Heart left ventricle (tissue), 16 donors: ENCODE measurements at regions of chr15 and their contacts with region 1.

Region 1: GRCh38 chr15:63891079-63891767 is 57.5 kb upstream of the HERC1 start:
- DNase-seq: peak; percentile 73 to 88 (median 80)
- ATAC-seq: peak; percentile 24 to 86 (median 80)
- H3K4me3 ChIP-seq: no peak overlapping the region
- H3K27ac ChIP-seq: peak overlapping the region in 1 of 12 donors; percentile 63
- H3K4me1 ChIP-seq: peaks cover 0 to 72% (median 5%) of the 10 kb centered on the region in 12 donors
- H3K27me3 ChIP-seq: no peaks in the 10 kb centered on the region
- CTCF ChIP-seq: peak; percentile 80 to 94 (median 87)
- POLR2A ChIP-seq: no peak

Region 2: DNA sequence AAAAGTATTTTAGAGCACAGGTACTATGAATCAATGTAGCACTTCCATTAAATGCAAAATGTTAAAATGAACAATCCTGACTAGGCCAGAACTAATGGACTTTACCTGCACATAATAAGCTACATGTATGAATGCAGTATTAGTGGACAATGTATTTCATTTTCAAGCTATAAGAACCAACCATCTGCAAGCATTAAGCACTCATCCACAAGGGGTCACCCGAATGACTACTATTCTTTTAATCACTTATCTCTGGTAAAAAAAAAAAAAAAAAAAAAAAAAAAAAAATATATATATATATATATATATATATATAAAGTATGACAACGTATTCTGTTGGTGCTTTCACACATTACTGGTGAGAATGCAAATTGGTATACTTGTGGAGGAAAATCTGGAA is 64.7 kb before region 1 on chr15:
- intact Hi-C with region 1: loop called in 3 of 10 experiments (anchors 2 to 5 kb)
- DNase-seq: no peak
- ATAC-seq: no peak
- H3K4me3 ChIP-seq: no peak overlapping the region
- H3K27ac ChIP-seq: no peak overlapping the region
- H3K4me1 ChIP-seq: peaks cover 0 to 55% (median 35%) of the 10 kb centered on the region in 12 donors
- H3K27me3 ChIP-seq: no peaks in the 10 kb centered on the region
- CTCF ChIP-seq: peak in 5 of 12 donors; percentile 15 to 31 (median 19)
- POLR2A ChIP-seq: no peak

Region 3: DNA sequence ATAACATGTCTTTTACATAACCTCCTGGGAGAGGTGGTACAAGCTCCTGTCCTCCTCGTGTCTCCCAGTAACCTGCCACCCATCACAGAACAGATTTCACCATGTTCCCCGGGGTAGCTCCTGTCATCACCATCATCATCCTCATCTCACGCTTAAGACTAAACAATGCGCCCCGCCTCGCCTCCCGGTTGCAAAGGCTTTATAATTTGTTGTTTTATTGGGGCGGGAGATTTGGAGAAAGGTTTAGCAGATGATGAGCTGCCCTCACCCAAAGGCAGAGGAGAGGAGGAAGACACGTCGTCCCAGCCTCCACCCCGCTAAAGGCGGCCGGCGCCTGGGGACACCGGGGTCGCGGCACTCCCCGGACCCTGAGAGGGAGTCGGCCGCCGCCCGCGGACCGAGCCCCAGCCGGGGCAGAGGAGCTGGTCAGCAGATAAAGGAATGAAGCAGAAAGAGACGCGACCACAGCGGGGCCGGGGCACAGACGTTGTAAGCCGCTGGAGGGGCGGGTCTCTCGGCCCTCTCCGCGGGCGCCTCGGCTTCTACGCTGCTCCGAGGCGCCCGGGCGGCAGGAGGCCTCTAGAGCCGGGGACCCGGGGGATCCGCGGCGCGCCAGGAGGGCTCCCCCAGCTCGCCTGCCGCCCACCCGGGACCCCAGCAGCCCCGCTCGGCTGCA is 58.1 kb before region 1 on chr15:
- intact Hi-C with region 1: loop called in 3 of 10 experiments (anchors 2 to 5 kb)
- DNase-seq: peak in 4 of 5 donors; percentile 32 to 76 (median 42)
- ATAC-seq: peak in 3 of 4 donors; percentile 28 to 75 (median 71)
- H3K4me3 ChIP-seq: peak overlapping the region; percentile 48 to 95 (median 84)
- H3K27ac ChIP-seq: peak overlapping the region; percentile 88 to 98 (median 93)
- H3K4me1 ChIP-seq: peaks cover 0 to 50% (median 34%) of the 10 kb centered on the region in 12 donors
- H3K27me3 ChIP-seq: no peaks in the 10 kb centered on the region
- CTCF ChIP-seq: no peak
- POLR2A ChIP-seq: no peak